ENCODE measurements at regions of chr17 and their contacts with region 1.

Region 1: GRCh38 chr17:11356371-11356770 is 115.4 kb downstream of the SHISA6 start:
- DNase-seq: no peak
- ATAC-seq: peak in 2 of 8 donors; percentile 29 to 49
- H3K4me3 ChIP-seq: no peak overlapping the region
- H3K27ac ChIP-seq: no peak overlapping the region
- H3K4me1 ChIP-seq: no peaks in the 10 kb centered on the region
- H3K27me3 ChIP-seq: no peaks in the 10 kb centered on the region
- CTCF ChIP-seq: no peak

Region 2: DNA sequence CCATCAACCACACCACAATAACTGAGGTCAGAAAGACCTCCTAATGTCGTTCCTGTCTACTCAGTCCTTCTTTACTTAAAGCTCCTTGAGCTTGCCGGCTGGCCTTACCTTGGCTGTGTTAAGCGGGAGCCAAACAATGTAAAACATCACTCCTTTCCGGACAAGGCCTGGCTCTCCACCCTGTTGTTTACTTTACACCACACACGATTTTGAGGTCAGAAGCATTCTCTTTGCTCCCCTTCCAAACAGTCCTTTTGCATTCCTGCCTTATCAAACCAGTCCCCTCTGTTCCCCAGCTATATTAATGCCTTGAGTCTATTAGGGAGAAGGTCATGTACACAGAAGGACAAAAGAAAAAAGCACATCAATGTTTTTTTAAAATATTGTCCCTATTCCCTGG is 134.7 kb before region 1 on chr17:
- intact Hi-C with region 1: no loop called
- DNase-seq: no peak
- ATAC-seq: no peak
- H3K4me3 ChIP-seq: no peak overlapping the region
- H3K27ac ChIP-seq: no peak overlapping the region
- H3K4me1 ChIP-seq: no peaks in the 10 kb centered on the region
- H3K27me3 ChIP-seq: peaks cover 0 to 23% (median 0%) of the 10 kb centered on the region in 7 donors
- CTCF ChIP-seq: no peak

Region 3: DNA sequence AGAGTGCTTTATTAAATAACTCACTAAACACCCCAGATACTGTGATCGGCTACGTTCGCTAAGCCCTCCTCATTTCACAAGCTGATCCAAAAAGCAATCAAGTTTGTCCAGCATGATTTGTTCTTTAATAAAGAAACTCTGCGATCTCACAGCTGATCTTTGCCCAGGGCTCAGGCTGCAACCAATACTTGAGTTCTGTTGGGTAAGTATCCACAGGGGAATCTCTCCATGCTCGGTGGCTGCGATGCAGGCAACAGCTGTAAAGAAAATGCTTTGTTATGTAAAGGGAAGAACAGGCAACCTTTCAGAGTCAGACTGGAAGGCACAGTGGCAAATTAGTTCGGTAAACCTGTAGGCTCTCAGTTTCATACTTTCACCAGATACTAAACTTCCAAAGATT is 47.8 kb before region 1 on chr17:
- intact Hi-C with region 1: loop called in 1 of 10 experiments (anchors 5 kb)
- DNase-seq: no peak
- ATAC-seq: no peak
- H3K4me3 ChIP-seq: no peak overlapping the region
- H3K27ac ChIP-seq: no peak overlapping the region
- H3K4me1 ChIP-seq: no peaks in the 10 kb centered on the region
- H3K27me3 ChIP-seq: peaks cover 0 to 6% (median 0%) of the 10 kb centered on the region in 7 donors
- CTCF ChIP-seq: no peak

Region 4: DNA sequence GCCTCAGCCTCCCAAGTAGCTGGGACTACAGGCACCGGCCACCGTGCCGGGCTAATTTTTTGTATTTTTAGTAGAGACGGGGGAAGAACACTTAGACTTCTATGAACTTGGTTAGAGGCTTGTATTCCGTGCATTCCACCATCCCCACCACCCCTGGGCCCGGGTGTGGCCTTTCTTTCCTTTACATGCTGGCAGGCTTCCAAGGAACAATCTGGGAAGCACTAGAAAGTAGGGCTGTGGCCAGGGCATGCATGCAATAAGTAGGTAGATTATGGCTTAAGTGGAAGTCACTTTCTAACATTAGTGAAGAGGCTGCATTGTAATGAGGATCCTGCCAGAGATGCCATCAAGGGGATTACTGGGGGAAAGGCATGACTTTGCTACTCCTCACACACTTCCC is 56.3 kb after region 1 on chr17:
- intact Hi-C with region 1: loop called in 1 of 10 experiments (anchors 10 kb)
- DNase-seq: no peak
- ATAC-seq: no peak
- H3K4me3 ChIP-seq: no peak overlapping the region
- H3K27ac ChIP-seq: no peak overlapping the region
- H3K4me1 ChIP-seq: no peaks in the 10 kb centered on the region
- H3K27me3 ChIP-seq: peaks cover 0 to 6% (median 0%) of the 10 kb centered on the region in 7 donors
- CTCF ChIP-seq: no peak